Ascending aorta (tissue), 2 donors: ENCODE measurements at regions of chr15 and their contacts with region 1.

Region 1: GRCh38 chr15:49718234-49718633 is 97.4 kb downstream of the DTWD1 start:
- DNase-seq: no peak
- H3K4me3 ChIP-seq: peak overlapping the region; percentile 3 to 31
- H3K27ac ChIP-seq: peak overlapping the region; percentile 73 to 83
- H3K4me1 ChIP-seq: peaks cover 0 to 17% of the 10 kb centered on the region in 2 donors
- H3K27me3 ChIP-seq: no peaks in the 10 kb centered on the region
- CTCF ChIP-seq: no peak

Region 2: DNA sequence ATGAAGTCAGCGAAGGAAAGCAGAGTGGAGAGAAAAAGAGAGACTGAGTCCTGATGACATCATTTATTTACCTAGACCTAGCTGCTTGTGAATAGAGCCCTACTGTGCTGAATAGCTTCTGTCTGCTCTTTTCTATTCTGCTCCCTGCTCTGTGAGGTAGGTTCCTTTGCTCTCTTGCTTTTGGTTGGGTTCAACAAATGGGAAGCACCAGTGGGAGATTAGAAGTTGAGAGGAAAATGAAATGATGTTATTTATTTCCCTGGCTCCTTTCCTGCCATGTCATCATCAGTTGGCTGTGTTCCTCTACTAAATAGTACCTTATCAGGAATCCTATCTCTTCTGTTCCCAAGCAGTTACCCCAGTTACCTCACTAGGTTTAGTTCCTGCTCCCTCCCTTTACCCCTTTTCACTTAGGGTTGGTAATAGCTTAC is 73.9 kb before region 1 on chr15:
- intact Hi-C with region 1: loop called (anchors 5 kb)
- DNase-seq: no peak
- H3K4me3 ChIP-seq: no peak overlapping the region
- H3K27ac ChIP-seq: peak overlapping the region; percentile 65 to 74
- H3K4me1 ChIP-seq: peaks cover 4 to 19% of the 10 kb centered on the region in 2 donors
- H3K27me3 ChIP-seq: no peaks in the 10 kb centered on the region
- CTCF ChIP-seq: no peak